Left cardiac atrium (tissue), 4 donors: ENCODE measurements at regions of chr12 and their contacts with region 1.

Region 1: GRCh38 chr12:10140001-10140400 is 10.0 kb upstream of the CLEC7A start:
- DNase-seq: no peak
- ATAC-seq: peak; percentile 60 to 69

Region 2: GRCh38 chr12:10033783-10034545 is 106.0 kb before region 1 on chr12:
- intact Hi-C with region 1: loop called (anchors 1 to 5 kb)
- DNase-seq: no peak
- ATAC-seq: no peak